ENCODE measurements at regions of chr10 and their contacts with region 1.

Region 1: GRCh38 chr10:133608855-133609254 is 17.7 kb downstream of the FRG2B start:
- DNase-seq: no peak
- H3K4me3 ChIP-seq: no peak overlapping the region
- H3K27ac ChIP-seq: no peak overlapping the region
- H3K4me1 ChIP-seq: no peaks in the 10 kb centered on the region
- H3K27me3 ChIP-seq: peaks cover 93% of the 10 kb centered on the region
- CTCF ChIP-seq: peak; percentile 67

Region 2: DNA sequence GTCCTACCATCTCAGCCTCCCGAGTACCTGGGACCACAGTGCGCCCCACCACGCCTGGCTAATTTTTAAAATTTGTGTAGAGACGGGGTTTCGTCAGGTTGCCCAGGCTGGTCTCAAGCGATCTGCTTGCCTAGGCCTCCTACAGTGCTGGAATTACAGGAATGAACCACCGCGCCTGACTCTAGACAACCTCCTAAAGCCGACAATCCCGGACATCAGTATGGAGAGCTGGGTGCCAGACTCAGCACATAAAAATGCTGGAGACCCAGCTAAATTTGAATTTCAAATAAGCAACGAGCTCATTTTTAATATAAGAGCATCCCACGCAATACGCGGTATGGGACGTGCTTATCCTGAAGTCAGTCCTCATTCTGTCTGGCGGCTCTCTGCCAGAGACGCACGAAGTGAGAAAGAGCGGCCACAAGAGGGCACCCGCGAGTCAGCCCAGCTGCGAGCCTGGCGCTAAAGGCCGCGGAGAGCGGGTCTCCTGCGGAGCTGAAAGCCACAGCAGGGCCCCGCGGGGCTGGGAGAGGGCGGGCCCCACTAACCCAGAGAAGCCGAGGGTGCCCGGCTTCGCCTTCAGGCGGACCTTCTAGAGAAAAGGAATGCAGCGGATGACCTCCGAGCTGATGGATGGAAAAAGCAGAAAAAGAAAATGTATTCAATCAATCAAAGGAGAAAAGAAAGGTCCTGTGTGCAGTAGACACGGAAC is 279.2 kb before region 1 on chr10:
- intact Hi-C with region 1: loop called (anchors 5 kb)
- DNase-seq: peak; percentile 85
- H3K4me3 ChIP-seq: peak overlapping the region; percentile 52
- H3K27ac ChIP-seq: no peak overlapping the region
- H3K4me1 ChIP-seq: peaks cover 25% of the 10 kb centered on the region
- H3K27me3 ChIP-seq: peaks cover 86% of the 10 kb centered on the region
- CTCF ChIP-seq: peak; percentile 98

Region 3: GRCh38 chr10:133520155-133520738 is 88.6 kb before region 1 on chr10:
- intact Hi-C with region 1: no loop called
- DNase-seq: peak; percentile 80
- H3K4me3 ChIP-seq: peak overlapping the region; percentile 63
- H3K27ac ChIP-seq: peak overlapping the region; percentile 34
- H3K4me1 ChIP-seq: peaks cover 9% of the 10 kb centered on the region
- H3K27me3 ChIP-seq: peaks cover 5% of the 10 kb centered on the region
- CTCF ChIP-seq: peak; percentile 91

Measured in left ventricle myocardium inferior (tissue), 1 donor.